ENCODE measurements at regions of chr10 and their contacts with region 1.

Region 1: DNA sequence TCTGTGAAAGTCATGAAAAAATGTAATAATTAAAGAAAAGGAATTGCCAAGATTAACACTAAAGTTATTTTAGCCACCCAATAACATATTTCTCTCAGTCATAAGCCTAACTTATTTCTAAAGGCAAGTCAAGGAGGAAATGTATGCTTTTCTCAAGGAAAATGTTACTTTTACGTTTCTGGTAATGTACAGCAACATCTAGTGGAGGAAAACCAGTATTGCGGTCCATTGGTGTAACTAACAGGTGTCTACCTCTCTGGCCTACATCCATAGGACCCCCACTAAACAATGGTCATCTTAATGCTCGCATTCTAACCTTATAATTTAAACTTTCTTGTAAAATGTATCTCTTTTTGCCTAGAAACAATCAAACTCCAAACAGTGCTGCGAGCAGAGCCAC is 437.5 kb downstream of the KIF20B start:
- DNase-seq: no peak
- ATAC-seq: no peak

Region 2: DNA sequence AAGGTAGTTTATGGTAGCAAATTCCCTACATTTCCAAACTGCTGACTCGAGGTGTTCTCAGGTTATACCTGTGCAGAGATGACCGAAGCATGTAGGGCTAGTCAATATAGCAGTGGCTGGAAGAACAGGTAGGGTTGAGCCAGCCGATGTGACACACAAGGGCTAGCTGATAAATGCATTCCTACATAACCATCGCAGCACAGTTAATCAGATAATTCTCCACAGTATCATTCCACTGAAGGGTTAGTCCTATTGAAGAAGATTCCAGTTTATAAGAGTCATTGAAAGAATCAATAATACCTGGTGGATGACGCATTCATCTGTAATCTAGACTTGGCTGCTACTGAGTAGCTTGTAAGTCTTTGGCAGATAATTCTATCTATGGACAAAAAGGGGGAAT is 217.4 kb before region 1 on chr10:
- intact Hi-C with region 1: no loop called
- DNase-seq: no peak
- ATAC-seq: no peak

Region 3: DNA sequence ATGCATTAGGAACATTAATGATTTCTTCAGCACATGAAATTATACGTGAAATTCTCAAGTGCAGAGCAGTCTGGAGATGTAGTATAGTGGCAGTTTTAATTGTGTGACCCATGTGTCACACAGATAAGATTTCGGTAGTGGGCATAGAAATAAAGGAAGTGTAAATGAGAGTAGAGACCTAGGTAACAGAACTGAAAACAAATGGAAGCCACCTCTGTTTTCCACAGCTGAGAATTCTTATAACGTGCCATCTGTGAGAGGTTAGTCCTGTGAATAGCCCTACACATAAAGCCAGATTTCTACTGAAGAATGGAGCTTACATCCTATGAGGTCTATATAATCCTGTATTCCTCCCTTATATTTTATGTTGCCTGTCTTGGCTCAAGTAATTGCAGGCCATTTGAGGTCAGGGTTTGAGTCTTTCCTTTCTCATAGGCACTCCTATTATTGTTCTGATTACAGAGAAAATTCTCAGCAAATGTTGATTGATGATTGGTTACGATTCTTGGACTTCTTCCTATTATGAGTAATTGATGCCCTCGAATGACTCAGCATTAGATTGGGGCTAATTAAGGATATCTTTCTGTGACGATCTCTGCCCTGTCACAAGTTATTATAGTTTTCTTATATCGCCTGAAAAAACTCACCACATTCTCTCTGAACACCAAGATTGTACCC is 179.3 kb before region 1 on chr10:
- intact Hi-C with region 1: loop called in 1 of 2 experiments (anchors 10 kb)
- DNase-seq: no peak
- ATAC-seq: no peak

Region 4: DNA sequence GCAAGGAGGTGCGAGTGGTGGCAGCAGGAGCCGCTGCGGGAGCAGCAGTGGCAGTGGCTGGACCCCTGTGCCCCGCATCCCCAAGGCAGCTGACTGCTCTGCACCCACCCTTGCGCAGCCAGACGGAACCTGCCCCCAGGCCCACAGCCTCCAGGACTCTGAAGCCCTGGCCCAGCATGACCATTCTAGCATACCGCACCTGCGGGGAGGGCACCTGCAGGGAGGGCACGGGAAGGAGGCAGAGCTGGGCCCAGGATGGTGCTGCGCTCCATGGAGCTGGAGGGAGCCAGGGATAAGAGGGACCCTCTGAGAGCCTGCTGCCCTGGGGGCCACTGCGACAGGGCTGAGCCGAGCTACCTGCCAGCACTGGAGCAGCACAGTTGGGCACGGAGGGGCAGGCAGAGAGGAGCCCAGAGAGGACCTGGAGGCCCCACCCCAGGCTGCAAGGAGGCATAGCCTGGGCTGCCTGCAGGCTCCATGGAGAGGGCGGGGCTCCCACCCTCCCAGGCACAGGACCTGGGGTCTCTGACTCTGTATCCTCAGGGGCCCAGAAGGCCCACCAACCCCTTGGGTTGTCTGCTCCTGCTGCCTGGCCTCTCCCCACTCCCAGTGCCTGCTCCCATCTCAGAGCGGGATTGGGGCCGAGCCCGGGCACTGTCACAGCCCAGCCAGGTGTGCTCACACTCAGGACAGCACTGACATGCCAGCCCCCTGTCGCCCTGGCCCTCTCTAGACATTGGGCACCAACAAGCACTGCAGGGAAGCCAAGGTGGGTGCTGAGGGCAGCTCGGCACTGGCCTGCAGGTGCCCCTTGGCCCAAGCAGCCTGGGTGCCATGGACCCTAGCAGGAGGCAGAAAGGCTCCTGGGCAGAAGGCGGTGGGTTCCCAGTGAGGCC is 631.4 kb after region 1 on chr10:
- intact Hi-C with region 1: no loop called
- DNase-seq: no peak
- ATAC-seq: no peak